ENCODE measurements at regions of chr19 and their contacts with region 1.

Region 1: GRCh38 chr19:42132851-42133528 is 744 bp upstream of the POU2F2 start:
- DNase-seq: peak; percentile 85
- H3K4me3 Mint-ChIP-seq: peak overlapping the region; percentile 93
- H3K27ac Mint-ChIP-seq: peak overlapping the region; percentile 91
- H3K4me1 Mint-ChIP-seq: peaks cover 61% of the 10 kb centered on the region
- H3K27me3 Mint-ChIP-seq: no peaks in the 10 kb centered on the region

Region 2: GRCh38 chr19:42121656-42122069 is 11.3 kb before region 1 on chr19:
- intact Hi-C with region 1: loop called (anchors 1 kb)
- DNase-seq: peak; percentile 74
- H3K4me3 Mint-ChIP-seq: peak overlapping the region; percentile 78
- H3K27ac Mint-ChIP-seq: peak overlapping the region; percentile 97
- H3K4me1 Mint-ChIP-seq: peaks cover 42% of the 10 kb centered on the region
- H3K27me3 Mint-ChIP-seq: no peaks in the 10 kb centered on the region

Region 3: GRCh38 chr19:42184401-42184861 is 51.4 kb after region 1 on chr19:
- intact Hi-C with region 1: loop called (anchors 1 kb)
- DNase-seq: peak; percentile 56
- H3K4me3 Mint-ChIP-seq: peak overlapping the region; percentile 19
- H3K27ac Mint-ChIP-seq: peak overlapping the region; percentile 54
- H3K4me1 Mint-ChIP-seq: peaks cover 45% of the 10 kb centered on the region
- H3K27me3 Mint-ChIP-seq: peaks cover 15% of the 10 kb centered on the region

Region 4: DNA sequence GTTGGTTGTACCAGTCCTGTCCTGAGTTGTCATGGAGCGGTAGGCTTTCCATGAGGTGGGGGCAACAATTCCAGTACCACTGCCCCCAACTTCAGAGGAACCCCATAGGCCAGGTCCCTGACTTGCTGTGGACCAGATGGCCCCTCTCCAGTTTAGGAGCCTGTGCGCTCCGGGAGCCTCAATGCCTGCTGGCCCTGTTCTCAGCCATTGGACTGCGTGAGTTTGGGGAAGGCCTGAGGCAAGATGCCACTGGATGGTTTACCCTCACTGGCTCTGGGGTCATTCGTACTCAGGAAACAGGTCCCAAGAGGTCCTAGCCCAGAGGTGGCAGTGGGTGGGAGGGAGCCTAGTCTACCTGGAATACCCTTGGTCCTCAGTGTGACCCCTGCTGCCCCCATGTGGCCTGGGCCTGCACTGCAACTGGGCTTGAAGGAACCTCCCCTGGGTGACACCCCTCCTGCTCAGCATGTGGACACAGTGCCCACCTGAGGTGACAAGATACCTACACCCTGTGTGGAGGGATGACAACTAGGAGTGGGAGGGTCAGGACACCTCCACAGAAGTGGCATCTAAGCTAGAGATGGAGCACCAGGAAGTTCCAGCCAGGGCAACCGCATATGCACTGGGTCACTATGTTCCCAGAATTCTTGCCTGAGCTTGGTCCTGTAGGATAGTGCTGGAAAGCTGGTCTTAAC is 163.0 kb after region 1 on chr19:
- intact Hi-C with region 1: loop called (anchors 1 kb)
- DNase-seq: peak; percentile 78
- H3K4me3 Mint-ChIP-seq: no peak overlapping the region
- H3K27ac Mint-ChIP-seq: peak overlapping the region; percentile 3
- H3K4me1 Mint-ChIP-seq: no peaks in the 10 kb centered on the region
- H3K27me3 Mint-ChIP-seq: no peaks in the 10 kb centered on the region